Sigmoid colon (tissue), 7 donors: ENCODE measurements at regions of chrX and their contacts with region 1.

Region 1: DNA sequence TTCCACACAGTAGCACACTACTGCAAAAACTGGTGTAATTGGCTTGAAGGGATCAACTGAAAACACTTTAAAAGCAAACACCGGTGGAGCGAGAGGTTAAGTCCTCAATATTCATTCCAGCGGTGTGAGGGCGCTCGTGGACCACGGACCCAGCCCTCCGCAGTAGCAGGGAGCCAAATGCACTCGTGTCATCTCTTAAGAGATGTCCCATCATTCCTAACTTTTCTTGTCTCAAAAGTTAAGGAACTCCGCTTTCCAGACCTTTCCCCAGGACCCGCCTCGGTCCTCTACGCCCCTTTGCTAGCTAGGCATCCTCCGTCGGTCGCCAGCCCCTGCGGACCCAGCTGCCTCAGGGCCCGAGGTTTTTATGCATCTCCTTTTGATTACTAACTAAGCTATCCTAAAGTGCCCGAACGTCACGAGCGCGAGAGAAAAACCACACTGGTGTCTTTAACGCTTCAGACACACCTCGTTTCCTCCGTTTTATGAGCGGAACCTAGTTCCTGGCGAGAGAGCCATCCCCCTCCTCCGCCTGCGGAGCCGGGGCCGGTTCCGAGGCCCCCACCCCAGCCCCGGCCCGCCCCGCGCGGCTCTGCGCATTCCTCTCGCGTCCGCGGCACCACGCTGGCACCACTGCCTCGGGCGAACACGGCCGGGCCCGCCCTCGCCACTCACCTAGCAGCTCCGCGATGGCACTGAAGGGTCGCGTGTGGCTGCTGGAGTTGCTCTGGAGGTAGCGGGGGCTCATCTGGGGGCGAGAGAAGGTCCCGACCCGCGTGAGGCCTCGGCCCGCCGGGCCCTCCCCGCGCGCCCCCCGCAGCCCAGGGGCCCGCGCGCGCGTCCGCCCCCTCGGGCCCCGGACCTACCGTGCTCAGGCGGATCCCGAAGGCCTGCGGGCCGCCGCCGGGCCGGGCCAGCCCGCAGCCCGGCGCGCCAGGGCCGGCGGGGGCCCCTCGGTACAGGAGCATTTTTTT is 723 bp downstream of the MORC4 start:
- DNase-seq: peak; percentile 76
- H3K4me3 ChIP-seq: peak overlapping the region; percentile 42 to 66 (median 62)
- H3K27ac ChIP-seq: peak overlapping the region; percentile 79 to 82 (median 81)
- H3K4me1 ChIP-seq: no peaks in the 10 kb centered on the region
- H3K27me3 ChIP-seq: no peaks in the 10 kb centered on the region
- CTCF ChIP-seq: peak in 3 of 4 experiments; percentile 9 to 39 (median 21)
- EP300 ChIP-seq: no peak
- POLR2A ChIP-seq: no peak

Region 2: GRCh38 chrX:107118322-107119147 is 119.2 kb after region 1 on chrX and contains the start of gene RBM41:
- intact Hi-C with region 1: loop called (anchors 2 kb)
- DNase-seq: peak; percentile 81
- H3K4me3 ChIP-seq: peak within 1 kb of the TSS; percentile 45 to 66 (median 62)
- H3K27ac ChIP-seq: peak within 1 kb of the TSS; percentile 64 to 77 (median 76)
- H3K4me1 ChIP-seq: peaks cover 0 to 8% (median 0%) of the 10 kb centered on the region in 4 donors
- H3K27me3 ChIP-seq: no peaks in the 10 kb centered on the region
- CTCF ChIP-seq: no peak
- EP300 ChIP-seq: no peak
- POLR2A ChIP-seq: no peak
- total RNA-seq, gene RBM41: 16.9 to 28.2 (median 21.9) TPM

Region 3: DNA sequence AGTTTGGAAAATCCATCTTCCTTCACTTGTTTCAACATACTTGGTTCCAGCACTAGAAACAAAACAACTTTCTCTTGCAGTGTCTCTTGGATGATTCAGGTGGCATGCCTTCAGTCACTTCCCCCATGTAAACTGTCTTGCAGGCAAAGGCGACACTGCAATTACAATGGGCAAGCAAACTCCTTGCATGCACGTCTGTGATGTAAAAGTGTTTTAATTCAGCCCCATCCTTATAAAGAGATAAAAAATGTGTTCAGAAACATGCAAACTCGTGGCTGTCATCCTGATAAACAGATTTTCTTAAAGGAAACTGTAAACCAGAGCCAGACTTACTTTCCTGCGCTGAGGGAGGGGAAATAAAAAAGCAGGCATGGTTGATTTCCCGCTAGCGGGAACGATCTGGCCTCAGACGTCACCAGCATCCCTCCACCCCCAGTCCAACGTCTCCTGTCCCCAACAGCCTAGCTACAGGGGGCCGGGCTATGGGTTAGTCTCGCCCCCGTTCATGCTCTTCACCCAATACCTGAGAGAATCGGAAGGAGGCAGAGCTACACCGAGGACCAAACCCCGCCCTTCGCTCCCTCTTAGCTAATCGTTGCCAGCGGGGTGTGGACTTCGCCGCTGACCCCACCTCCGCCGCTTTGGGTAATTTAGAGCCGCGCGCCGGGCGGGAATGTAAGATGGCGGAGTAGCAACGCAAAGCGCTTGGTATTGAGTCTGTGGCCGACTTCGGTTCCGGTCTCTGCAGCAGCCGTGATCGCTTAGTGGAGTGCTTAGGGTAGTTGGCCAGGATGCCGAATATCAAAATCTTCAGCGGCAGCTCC is 628.8 kb after region 1 on chrX and contains the start of gene PRPS1:
- intact Hi-C with region 1: loop called (anchors 10 kb)
- DNase-seq: peak; percentile 96
- H3K4me3 ChIP-seq: peak within 1 kb of the TSS; percentile 47 to 59 (median 58)
- H3K27ac ChIP-seq: peak within 1 kb of the TSS; percentile 80 to 87 (median 83)
- H3K4me1 ChIP-seq: peaks cover 0 to 13% (median 0%) of the 10 kb centered on the region in 4 donors
- H3K27me3 ChIP-seq: no peaks in the 10 kb centered on the region
- CTCF ChIP-seq: no peak
- EP300 ChIP-seq: no peak
- POLR2A ChIP-seq: peak; percentile 32 to 43
- total RNA-seq, gene PRPS1: 16.3 to 35.8 (median 21.5) TPM